Activated CD8-positive, alpha-beta T cell treated with anti-CD3 and anti-CD28 coated beads, Interleukin-2, amount 10 ng/mL, durations not matched to agents 7 days and 5 days (primary cell): ENCODE measurements at regions of chr20 and their contacts with region 1.

Region 1: DNA sequence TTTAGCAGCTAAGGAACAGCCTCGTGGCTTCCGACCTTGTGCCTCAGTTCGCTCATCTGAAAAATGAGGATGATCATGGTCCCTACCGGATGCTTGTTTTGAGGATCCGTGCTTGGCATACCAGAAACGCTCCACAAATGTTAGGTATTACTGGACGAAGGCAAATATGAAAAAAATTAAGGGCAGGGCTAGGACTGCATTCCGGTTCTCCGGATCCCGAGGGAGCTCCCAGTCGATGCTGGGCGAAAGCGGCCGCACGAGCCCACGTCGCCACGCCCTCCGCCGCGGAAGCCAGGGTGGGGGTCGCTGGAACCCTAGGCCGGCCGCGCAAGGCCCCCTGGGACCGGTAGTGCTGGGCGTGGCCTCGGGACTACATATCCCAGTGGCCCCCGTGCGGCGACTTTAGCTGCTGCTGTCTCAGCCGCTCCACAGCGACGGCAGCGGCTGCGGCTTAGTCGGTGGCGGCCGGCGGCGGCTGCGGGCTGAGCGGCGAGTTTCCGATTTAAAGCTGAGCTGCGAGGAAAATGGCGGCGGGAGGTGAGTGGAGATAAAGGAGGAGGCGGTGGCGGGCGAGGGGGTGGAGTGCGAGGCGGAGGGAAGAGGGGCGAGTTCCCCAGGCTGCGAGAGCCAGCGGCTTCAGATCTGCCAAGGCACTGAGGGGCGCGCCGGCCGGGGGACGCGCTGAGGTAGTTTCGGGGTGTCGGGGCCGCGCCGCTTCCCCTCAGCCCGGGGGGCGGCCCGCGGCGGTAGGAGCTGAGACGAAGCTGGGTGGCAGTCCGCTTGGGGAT is at the start of gene NCOA3:
- DNase-seq: peak; percentile 95
- ATAC-seq: peak; percentile 86
- H3K4me3 Mint-ChIP-seq: peak within 1 kb of the TSS; percentile 96
- H3K27ac Mint-ChIP-seq: peak within 1 kb of the TSS; percentile 96
- H3K4me1 Mint-ChIP-seq: peaks cover 44% of the 10 kb centered on the region
- H3K27me3 Mint-ChIP-seq: no peaks in the 10 kb centered on the region
- total RNA-seq, gene NCOA3: 57.4 to 60.1 TPM

Region 2: DNA sequence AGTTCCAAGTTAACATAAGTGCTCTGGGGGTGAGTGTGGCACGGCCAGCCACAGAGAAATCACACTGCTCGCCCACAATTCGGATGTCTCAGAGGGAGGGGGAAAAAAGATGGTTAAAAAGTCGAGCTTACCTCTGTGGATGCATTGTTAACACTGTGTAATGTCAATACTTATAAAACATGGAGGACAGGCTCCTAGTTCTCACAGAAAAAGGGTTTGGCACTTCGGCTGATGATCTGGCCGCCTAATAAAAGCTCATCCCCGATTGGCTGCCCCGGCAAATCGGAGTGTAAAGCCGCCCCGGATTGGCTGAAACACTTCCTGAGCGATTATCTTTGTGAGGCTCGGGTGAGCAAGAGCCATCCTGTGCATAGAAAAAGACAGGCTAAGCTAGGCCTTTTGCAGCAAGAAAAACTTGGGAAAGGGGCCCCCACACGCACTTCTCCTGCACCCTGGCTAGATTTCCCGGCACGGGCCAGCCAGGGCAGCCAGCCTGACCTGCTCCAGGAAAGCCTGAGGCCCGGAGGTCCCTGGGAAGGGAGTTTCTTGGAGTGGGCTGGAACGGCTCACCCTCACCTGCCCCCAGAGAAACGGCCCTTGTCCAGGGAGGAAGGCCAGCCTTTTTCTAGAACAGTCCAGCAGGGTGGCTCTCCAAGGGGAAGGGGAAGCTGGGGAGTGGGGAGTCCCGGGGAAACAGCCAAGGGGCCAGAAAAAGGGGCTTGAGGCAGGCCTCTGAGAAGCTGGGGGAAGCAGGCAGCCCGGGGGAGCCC is 145.0 kb before region 1 on chr20 and contains the start of gene ZMYND8:
- CTCF ChIA-PET with region 1: interaction called, 6 read pairs
- POLR2A ChIA-PET with region 1: interaction called, 23 read pairs
- DNase-seq: peak; percentile 96
- ATAC-seq: peak; percentile 83
- H3K4me3 Mint-ChIP-seq: peak within 1 kb of the TSS; percentile 84
- H3K27ac Mint-ChIP-seq: peak within 1 kb of the TSS; percentile 97
- H3K4me1 Mint-ChIP-seq: peaks cover 48% of the 10 kb centered on the region
- H3K27me3 Mint-ChIP-seq: no peaks in the 10 kb centered on the region
- total RNA-seq, gene ZMYND8: 44.3 to 44.7 TPM

Region 3: DNA sequence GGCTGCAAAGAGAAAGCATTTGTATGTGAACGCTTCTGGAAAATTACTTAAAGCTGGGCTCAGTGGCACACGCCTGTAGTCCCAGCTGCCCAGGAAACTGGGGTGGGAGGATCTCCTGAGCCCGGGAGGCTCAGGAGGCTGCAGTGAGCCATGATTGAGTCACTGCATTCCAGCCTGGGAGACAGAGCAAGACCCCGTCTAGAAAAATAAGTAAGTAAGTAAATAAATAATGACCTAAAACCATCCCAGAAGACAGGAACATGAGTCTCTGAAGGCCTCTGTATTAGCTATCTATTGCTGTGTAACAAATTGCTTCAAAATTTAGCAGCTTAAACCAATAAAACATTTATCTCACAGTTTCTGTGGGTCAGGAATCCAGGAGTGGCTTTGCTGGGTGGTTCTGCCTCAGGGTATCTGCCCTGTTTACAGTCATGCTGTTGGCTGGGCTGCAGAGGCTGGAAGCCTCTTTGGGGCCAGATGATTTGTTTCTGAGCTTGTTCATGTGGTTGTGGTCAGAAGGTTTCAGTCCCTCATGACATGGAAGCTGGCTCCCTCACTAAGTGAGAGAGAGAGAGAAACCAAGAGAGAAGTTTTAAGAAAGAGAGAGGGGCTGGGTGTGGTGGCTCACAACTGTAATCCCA is 48.4 kb before region 1 on chr20:
- CTCF ChIA-PET with region 1: interaction called, 11 read pairs
- POLR2A ChIA-PET with region 1: interaction called, 17 read pairs
- DNase-seq: peak; percentile 68
- ATAC-seq: peak; percentile 94
- H3K4me3 Mint-ChIP-seq: peak overlapping the region; percentile 30
- H3K27ac Mint-ChIP-seq: peak overlapping the region; percentile 84
- H3K4me1 Mint-ChIP-seq: peaks cover 42% of the 10 kb centered on the region
- H3K27me3 Mint-ChIP-seq: no peaks in the 10 kb centered on the region

Region 4: DNA sequence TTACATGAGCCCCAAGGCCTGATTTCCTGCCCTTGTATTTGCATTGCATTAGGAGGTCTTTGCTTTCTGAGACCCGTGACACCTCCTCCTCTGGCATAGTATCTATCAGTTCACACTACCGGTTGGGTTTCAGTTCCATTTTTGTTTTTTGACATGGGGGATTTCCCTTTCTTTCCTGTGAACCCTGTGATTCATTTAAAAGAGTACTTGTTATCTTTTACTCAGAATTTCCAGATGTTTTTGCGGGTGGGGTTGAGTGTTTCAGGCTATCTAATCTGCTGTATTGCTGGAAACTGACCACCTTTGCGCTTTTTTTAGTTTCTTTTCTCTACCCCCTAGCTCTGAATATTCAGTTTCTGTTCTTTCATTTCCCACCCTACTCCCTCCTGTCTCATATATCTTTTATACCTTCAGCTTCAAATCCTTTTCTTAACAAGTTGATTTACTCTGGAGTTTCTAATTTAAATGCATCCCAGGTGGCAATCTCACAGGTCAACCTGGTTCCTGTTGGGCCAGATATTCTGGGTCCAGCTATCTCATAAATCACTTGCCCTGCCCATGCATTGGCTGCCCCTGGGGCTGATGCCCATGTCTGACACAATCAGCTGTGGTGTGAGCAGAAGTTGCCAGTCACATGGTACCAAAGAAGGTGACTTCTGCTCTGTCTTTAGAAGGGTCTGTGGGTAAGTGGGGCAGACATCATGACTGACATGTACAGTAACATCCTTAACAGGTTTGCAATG is 14.3 kb before region 1 on chr20:
- CTCF ChIA-PET with region 1: interaction called, 33 read pairs
- POLR2A ChIA-PET with region 1: interaction called, 81 read pairs
- DNase-seq: peak; percentile 82
- ATAC-seq: peak; percentile 89
- H3K4me3 Mint-ChIP-seq: peak overlapping the region; percentile 69
- H3K27ac Mint-ChIP-seq: peak overlapping the region; percentile 96
- H3K4me1 Mint-ChIP-seq: peaks cover 61% of the 10 kb centered on the region
- H3K27me3 Mint-ChIP-seq: no peaks in the 10 kb centered on the region

Region 5: GRCh38 chr20:47610247-47610944 is 108.7 kb after region 1 on chr20:
- CTCF ChIA-PET with region 1: interaction called, 15 read pairs
- POLR2A ChIA-PET with region 1: interaction called, 28 read pairs
- DNase-seq: peak; percentile 89
- ATAC-seq: peak; percentile 87
- H3K4me3 Mint-ChIP-seq: peak overlapping the region; percentile 69
- H3K27ac Mint-ChIP-seq: peak overlapping the region; percentile 94
- H3K4me1 Mint-ChIP-seq: peaks cover 80% of the 10 kb centered on the region
- H3K27me3 Mint-ChIP-seq: no peaks in the 10 kb centered on the region

Region 6: GRCh38 chr20:47620808-47621805 is 119.4 kb after region 1 on chr20:
- CTCF ChIA-PET with region 1: interaction called, 14 read pairs
- POLR2A ChIA-PET with region 1: interaction called, 3 read pairs
- DNase-seq: peak; percentile 38
- ATAC-seq: peak; percentile 44
- H3K4me3 Mint-ChIP-seq: no peak overlapping the region
- H3K27ac Mint-ChIP-seq: no peak overlapping the region
- H3K4me1 Mint-ChIP-seq: peaks cover 38% of the 10 kb centered on the region
- H3K27me3 Mint-ChIP-seq: no peaks in the 10 kb centered on the region